Endothelial cell of umbilical vein (primary cell): ENCODE measurements at regions of chr2 and their contacts with region 1.

Region 1: GRCh38 chr2:190880378-190881073 is at the start of gene GLS:
- DNase-seq: peak; percentile 98
- H3K4me3 ChIP-seq: peak within 1 kb of the TSS; percentile 80 to 99 (median 98)
- H3K27ac ChIP-seq: peak within 1 kb of the TSS; percentile 83
- H3K4me1 ChIP-seq: peaks cover 32% of the 10 kb centered on the region
- H3K27me3 ChIP-seq: no peaks in the 10 kb centered on the region
- CTCF ChIP-seq: no peak
- POLR2A ChIP-seq: peak; percentile 99
- total RNA-seq, gene GLS: 181 and 183 TPM in 2 replicates

Region 2: DNA sequence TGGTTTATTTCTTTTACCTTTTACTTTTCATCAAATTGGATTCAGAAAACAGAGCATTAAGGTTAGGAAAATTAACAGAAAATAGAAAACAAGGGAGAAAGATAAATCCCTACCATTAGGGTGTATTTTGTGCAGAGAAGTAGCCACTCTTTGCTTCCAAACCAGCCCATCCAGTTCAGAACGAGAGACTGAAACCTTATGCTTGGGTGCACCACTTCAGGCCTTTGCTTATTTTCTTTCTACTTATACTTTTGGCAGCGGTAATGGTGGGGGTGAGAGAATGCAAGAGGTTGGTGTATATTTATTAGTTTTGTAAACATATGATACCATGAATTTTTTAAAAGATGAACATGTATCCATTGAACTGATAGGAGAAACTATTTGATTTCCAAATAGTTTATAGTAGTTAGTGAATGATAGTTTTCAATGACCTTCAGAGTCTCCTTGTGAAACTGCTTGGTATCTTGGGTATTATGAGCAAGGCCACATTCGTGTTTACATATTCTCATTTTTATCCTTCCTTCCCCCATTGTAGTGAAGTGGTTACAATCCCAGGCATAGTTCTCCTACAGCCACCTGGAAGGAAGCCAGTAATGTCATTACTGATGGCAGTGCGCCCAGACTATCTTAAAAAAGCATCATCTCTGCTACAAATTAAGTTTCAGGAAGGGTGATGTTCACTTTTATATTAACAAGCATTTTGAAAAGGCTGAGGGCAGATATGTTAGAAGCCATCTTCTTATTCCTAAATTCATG is 411.5 kb before region 1 on chr2:
- CTCF ChIA-PET with region 1: no interaction called
- POLR2A ChIA-PET with region 1: no interaction called
- dilution Hi-C with region 1: no loop called
- intact Hi-C with region 1: no loop called
- DNase-seq: peak; percentile 98
- H3K4me3 ChIP-seq: no peak overlapping the region
- H3K27ac ChIP-seq: peak overlapping the region; percentile 75
- H3K4me1 ChIP-seq: peaks cover 9% of the 10 kb centered on the region
- H3K27me3 ChIP-seq: no peaks in the 10 kb centered on the region
- CTCF ChIP-seq: no peak
- POLR2A ChIP-seq: no peak

Region 3: GRCh38 chr2:190791347-190791975 is 89.1 kb before region 1 on chr2:
- CTCF ChIA-PET with region 1: no interaction called
- POLR2A ChIA-PET with region 1: no interaction called
- dilution Hi-C with region 1: no loop called
- intact Hi-C with region 1: loop called (anchors 2 kb)
- DNase-seq: peak; percentile 93
- H3K4me3 ChIP-seq: peak overlapping the region in 1 of 3 experiments; percentile 49
- H3K27ac ChIP-seq: peak overlapping the region; percentile 92
- H3K4me1 ChIP-seq: peaks cover 45% of the 10 kb centered on the region
- H3K27me3 ChIP-seq: no peaks in the 10 kb centered on the region
- CTCF ChIP-seq: no peak
- POLR2A ChIP-seq: no peak

Region 4: DNA sequence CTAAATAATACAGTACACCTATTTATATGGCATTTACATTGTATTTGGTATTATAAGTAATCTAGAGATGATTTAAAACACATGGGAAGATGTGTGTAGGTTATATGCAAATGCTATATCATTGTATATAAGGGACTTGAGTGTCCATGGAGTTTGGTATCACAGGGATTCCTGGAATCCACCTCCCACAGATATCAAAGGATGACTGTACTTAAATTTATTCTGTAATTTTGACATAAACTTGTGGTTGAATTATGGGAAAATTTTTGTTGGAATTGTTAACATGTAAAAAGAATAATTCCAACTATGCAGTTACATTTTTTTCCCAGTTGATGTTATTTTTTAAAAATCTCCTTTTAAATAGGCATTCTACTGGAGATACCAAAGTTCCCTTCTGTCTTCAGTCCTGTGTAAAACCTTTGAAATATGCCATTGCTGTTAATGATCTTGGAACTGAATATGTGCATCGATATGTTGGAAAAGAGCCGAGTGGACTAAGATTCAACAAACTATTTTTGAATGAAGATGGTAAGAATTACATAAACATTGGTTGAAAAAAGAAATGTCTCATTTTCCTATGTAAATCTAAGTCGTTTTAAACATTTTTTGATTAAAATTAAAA is 24.2 kb after region 1 on chr2:
- CTCF ChIA-PET with region 1: no interaction called
- POLR2A ChIA-PET with region 1: no interaction called
- dilution Hi-C with region 1: no loop called
- intact Hi-C with region 1: no loop called
- DNase-seq: no peak
- H3K4me3 ChIP-seq: no peak overlapping the region
- H3K27ac ChIP-seq: no peak overlapping the region
- H3K4me1 ChIP-seq: no peaks in the 10 kb centered on the region
- H3K27me3 ChIP-seq: no peaks in the 10 kb centered on the region
- CTCF ChIP-seq: no peak
- POLR2A ChIP-seq: no peak

Region 5: DNA sequence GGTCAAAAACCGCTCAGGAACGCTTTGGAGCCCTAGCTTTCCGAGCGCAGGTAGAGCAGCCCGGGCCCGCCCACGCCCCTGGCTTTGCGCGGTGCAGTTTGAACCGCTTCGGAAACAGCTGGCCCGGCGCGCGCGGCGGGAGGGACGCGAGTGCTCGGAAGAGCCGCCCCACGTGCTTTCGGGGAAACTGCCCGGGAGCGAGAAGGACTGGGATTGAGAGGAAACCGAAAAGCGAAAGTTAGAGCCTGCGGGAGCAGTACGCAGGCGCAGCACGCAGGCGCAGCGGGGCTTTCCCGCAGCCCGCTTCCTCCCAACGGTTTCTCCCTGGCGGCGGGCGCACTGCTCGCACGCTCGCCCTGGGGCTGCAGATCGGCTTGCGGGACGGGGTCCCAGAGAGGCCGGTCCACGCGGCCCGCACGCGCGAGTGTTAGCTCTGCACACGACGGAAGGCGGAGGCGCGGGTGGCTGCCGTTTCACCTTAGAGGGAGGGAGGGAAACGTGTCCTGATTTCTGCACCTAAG is 139.8 kb after region 1 on chr2:
- CTCF ChIA-PET with region 1: no interaction called
- POLR2A ChIA-PET with region 1: no interaction called
- dilution Hi-C with region 1: no loop called
- intact Hi-C with region 1: loop called (anchors 1 kb)
- DNase-seq: peak; percentile 99
- H3K4me3 ChIP-seq: peak overlapping the region; percentile 39 to 57 (median 47)
- H3K27ac ChIP-seq: peak overlapping the region; percentile 51
- H3K4me1 ChIP-seq: peaks cover 14% of the 10 kb centered on the region
- H3K27me3 ChIP-seq: no peaks in the 10 kb centered on the region
- CTCF ChIP-seq: peak in 1 of 2 donors; percentile 10
- POLR2A ChIP-seq: peak; percentile 97